Caco-2 (cell line): ENCODE measurements at regions of chr1 and their contacts with region 1.

Region 1: DNA sequence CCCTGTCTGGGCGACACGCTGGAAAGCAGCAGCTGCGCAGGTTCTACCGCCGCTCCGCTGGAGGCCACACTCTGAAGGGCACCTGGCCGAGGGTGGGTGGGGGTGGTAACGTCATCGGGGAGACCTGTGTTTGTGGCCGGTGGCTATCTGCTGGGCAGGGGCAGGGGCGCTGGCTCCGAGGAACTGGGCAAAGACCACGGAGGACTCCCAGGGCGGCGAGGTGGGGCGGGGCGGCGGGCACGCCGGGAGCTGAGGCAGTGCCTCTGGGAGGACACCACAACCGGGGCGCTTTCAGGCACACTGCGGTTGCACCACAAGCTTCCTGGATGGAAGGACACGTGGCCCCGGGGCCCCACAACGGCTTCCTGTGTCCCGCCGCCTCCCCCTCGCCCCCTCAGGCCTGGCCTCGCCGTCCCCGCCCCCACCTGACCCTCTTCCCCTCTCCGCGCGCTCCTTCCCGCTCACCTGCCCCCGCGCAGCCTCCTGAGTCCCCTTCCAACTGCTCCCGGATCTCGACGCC is 3.3 kb upstream of the DENND2D start:
- DNase-seq: peak; percentile 80 to 89
- H3K4me3 ChIP-seq: peak overlapping the region; percentile 54
- H3K4me3 Mint-ChIP-seq: peak overlapping the region; percentile 77
- H3K27ac Mint-ChIP-seq: peak overlapping the region; percentile 49
- H3K4me1 ChIP-seq: peaks cover 34% of the 10 kb centered on the region
- H3K4me1 Mint-ChIP-seq: peaks cover 14% of the 10 kb centered on the region
- H3K27me3 ChIP-seq: no peaks in the 10 kb centered on the region
- H3K27me3 Mint-ChIP-seq: no peaks in the 10 kb centered on the region
- CTCF ChIP-seq: no peak

Region 2: GRCh38 chr1:111161843-111162487 is 41.8 kb before region 1 on chr1:
- CTCF ChIA-PET with region 1: no interaction called
- POLR2A ChIA-PET with region 1: no interaction called
- intact Hi-C with region 1: loop called (anchors 5 kb)
- DNase-seq: no peak
- H3K4me3 ChIP-seq: no peak overlapping the region
- H3K4me3 Mint-ChIP-seq: no peak overlapping the region
- H3K27ac Mint-ChIP-seq: no peak overlapping the region
- H3K4me1 ChIP-seq: peaks cover 10% of the 10 kb centered on the region
- H3K4me1 Mint-ChIP-seq: peaks cover 7% of the 10 kb centered on the region
- H3K27me3 ChIP-seq: no peaks in the 10 kb centered on the region
- H3K27me3 Mint-ChIP-seq: no peaks in the 10 kb centered on the region
- CTCF ChIP-seq: no peak